Activated CD8-positive, alpha-beta T cell treated with anti-CD3 and anti-CD28 coated beads for 36 hours (primary cell): ENCODE measurements at regions of chr3 and their contacts with region 1.

Region 1: DNA sequence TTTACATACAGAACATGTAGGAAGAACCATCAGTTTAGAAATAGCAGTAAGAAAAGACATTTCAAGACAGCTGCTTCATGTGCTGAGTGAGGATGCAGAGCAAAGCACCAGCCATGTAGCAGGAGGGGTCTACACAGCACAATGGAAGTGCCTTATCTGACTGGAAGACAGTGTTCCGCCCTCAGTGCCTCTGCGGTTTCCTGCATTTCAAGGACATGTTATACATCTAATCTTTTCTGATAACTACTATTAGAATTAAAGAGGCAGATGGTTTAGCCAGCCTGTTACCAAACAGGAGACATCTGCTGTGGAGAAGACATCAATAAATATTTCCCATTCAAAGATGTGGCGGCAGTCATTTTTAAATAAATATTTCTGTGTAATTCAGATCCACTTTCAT is 10.6 kb downstream of the LSG1 start:
- DNase-seq: no peak
- ATAC-seq: no peak
- H3K4me3 Mint-ChIP-seq: no peak overlapping the region
- H3K27ac Mint-ChIP-seq: peak overlapping the region; percentile 48
- H3K4me1 Mint-ChIP-seq: peaks cover 11% of the 10 kb centered on the region
- H3K27me3 Mint-ChIP-seq: no peaks in the 10 kb centered on the region
- CTCF ChIP-seq: no peak

Region 2: GRCh38 chr3:194671900-194672808 is 10.8 kb after region 1 on chr3 and contains the start of gene LSG1:
- CTCF ChIA-PET with region 1: interaction called, 64 read pairs
- POLR2A ChIA-PET with region 1: interaction called, 9 read pairs
- intact Hi-C with region 1: no loop called
- DNase-seq: peak; percentile 94
- ATAC-seq: peak; percentile 88
- H3K4me3 Mint-ChIP-seq: peak within 1 kb of the TSS; percentile 94
- H3K27ac Mint-ChIP-seq: peak within 1 kb of the TSS; percentile 98
- H3K4me1 Mint-ChIP-seq: peaks cover 59% of the 10 kb centered on the region
- H3K27me3 Mint-ChIP-seq: peaks cover 2% of the 10 kb centered on the region
- CTCF ChIP-seq: no peak
- total RNA-seq, gene LSG1: 36.5 to 41.3 TPM